ENCODE measurements at regions of chr11 and their contacts with region 1.

Region 1: DNA sequence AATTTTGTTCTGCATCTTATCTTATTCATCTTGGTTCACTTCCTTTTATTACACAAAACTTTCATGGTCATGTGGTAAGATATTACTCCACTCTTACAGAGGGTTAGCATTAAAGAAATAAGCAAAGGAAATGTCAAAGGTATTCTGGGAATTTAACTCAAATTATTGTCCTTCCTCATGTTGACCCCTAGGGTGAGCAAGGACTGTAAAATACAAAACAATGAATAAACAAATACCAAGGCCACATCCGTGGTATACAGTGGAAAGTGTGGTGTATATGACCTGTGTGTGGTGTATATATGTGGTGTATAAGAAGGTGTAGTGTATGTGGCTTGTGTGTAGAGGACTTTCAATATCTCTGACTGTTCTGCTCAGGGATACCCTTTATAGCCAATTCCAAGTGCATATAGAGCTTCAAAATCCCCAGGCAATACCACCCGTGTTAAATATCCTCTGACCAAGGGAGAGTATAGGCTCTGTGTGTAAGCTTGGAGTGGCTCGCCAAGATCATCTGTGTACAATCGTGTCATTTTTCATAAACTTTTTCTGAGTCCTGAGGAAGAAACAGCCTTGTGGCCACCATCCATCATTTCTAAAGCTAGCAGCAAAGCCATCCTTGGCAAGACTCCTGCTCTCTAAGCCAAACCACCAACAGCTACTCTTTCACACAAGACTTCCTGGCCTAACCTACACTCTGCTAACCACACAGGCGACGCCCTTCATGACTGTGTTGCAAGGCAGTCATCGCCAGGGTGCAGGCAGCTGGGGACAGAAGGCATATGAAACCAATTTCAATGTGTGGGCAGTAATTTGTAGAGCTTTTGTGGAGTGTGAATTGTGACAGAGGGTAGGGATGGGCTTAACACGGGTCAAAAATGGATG is 548.0 kb downstream of the ETS1 start:
- DNase-seq: peak; percentile 77
- H3K4me3 Mint-ChIP-seq: peak overlapping the region; percentile 68
- H3K27ac Mint-ChIP-seq: peak overlapping the region; percentile 92
- H3K4me1 Mint-ChIP-seq: peaks cover 34% of the 10 kb centered on the region
- H3K27me3 Mint-ChIP-seq: no peaks in the 10 kb centered on the region

Region 2: DNA sequence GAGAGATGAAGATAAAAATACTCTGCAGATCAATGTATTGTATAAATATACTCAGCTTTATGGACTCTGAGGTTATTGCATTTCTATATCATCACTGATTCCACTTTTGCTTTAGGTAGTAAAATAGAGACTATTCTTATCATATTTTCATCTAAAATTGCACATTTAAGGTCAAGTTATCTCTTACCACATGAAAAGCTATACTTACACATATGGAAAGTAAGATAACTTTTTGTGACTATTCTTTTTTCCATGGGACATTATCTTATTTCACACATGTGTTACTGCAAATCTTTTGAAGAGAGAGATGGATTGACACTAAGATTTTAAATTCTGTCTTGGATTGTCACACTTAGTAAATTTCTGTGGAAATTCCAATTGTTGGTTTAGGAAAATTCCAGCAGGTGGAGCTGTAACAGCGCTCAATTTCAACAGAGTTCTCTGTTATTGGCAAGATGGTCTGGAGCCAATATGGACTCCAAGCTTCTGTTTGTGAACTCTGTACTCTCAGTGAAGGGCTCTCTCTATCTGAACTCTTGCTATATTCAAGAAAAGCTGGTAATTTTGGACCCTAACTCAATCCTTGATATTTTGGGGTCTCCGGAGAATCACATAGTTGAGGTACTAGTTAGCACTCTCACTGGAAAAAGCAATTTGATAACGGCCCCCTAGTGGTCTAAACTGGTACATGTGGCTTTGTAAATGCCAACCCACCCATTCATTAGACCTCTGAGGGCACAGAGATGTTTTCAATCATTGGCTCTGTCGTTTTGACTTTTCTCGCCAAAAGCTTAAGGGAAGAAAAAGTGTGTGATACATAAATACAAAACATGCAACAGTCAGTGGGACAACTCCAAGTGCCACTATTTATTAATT is 118.3 kb after region 1 on chr11:
- intact Hi-C with region 1: loop called (anchors 2 kb)
- DNase-seq: peak; percentile 44
- H3K4me3 Mint-ChIP-seq: peak overlapping the region; percentile 16
- H3K27ac Mint-ChIP-seq: peak overlapping the region; percentile 66
- H3K4me1 Mint-ChIP-seq: peaks cover 13% of the 10 kb centered on the region
- H3K27me3 Mint-ChIP-seq: peaks cover 16% of the 10 kb centered on the region

Region 3: DNA sequence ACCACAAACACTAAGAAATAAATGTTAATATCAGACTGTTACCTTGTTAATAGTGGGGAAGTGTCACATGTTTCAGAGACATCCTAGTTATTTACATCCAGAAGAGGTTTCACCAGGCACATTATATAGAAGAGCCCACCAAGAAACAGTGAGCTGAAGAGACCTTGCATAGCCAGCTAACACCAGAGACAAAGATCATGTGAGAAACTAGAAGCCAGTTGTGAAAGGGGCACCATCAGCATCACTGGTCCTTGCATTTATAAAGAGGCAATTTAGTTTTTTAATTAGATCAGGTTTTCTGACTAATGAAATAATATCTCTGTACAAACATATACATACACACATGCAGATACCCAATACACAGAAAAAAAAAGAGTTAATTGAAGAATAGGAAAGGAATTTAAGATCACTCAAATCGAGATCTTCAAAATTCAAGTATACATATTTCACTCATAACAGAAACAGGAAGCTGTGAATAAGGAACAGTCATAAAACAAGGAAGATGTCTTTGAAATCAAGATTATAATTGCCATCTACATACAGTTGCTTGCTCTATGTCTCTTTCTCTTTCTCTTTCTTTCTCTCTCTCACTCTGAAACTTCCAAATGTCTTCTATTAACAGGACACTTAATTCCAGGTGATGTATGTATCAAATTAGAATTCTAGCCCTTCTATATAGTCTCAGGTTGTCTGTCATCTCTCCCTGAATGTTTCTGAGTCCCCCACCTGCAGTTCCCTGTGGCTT is 199.3 kb after region 1 on chr11:
- intact Hi-C with region 1: loop called (anchors 1 kb)
- DNase-seq: no peak
- H3K4me3 Mint-ChIP-seq: peak overlapping the region; percentile 0
- H3K27ac Mint-ChIP-seq: peak overlapping the region; percentile 47
- H3K4me1 Mint-ChIP-seq: peaks cover 35% of the 10 kb centered on the region
- H3K27me3 Mint-ChIP-seq: peaks cover 2% of the 10 kb centered on the region

Region 4: GRCh38 chr11:128582496-128583366 is 543.4 kb after region 1 on chr11:
- intact Hi-C with region 1: loop called (anchors 1 kb)
- DNase-seq: no peak
- H3K4me3 Mint-ChIP-seq: no peak overlapping the region
- H3K27ac Mint-ChIP-seq: peak overlapping the region; percentile 80
- H3K4me1 Mint-ChIP-seq: peaks cover 51% of the 10 kb centered on the region
- H3K27me3 Mint-ChIP-seq: peaks cover 6% of the 10 kb centered on the region

Region 5: DNA sequence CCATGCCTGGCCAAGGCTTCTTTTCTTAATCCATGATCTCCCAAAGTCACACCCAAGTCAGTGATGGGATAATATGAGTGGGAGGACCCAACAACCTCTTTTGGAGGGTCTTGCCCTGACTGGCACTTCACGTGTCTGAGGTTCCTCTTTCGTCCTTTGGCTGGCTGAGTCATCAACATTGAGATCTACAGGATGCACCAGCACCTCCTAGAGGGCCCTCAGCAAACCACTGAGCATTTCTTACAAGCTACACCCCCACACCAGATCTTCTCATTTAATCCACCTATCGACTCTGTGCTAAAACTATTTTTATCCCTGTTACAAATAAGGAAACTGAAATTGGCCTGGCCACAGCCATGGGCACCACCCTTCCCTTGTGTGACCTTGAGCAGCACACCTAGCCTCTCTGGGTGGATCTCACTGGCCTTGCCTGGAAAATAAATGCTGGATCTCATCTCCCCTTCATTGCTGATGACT is 717.9 kb after region 1 on chr11:
- intact Hi-C with region 1: loop called (anchors 1 kb)
- DNase-seq: peak; percentile 55
- H3K4me3 Mint-ChIP-seq: peak overlapping the region; percentile 63
- H3K27ac Mint-ChIP-seq: peak overlapping the region; percentile 95
- H3K4me1 Mint-ChIP-seq: peaks cover 68% of the 10 kb centered on the region
- H3K27me3 Mint-ChIP-seq: no peaks in the 10 kb centered on the region

Region 6: GRCh38 chr11:128965485-128965884 is 926.1 kb after region 1 on chr11:
- intact Hi-C with region 1: loop called (anchors 2 kb)
- DNase-seq: peak; percentile 6
- H3K4me3 Mint-ChIP-seq: peak overlapping the region; percentile 41
- H3K27ac Mint-ChIP-seq: peak overlapping the region; percentile 53
- H3K4me1 Mint-ChIP-seq: peaks cover 66% of the 10 kb centered on the region
- H3K27me3 Mint-ChIP-seq: no peaks in the 10 kb centered on the region

Measured in activated T-helper 1 cell treated with anti-CD3 and anti-CD28 coated beads, Interleukin-12 subunit alpha, Interleukin-12 subunit beta, Interleukin-2, Interleukin-4 antibody, amounts not matched to agents 30 ng/mL and 10 ng/mL and 1 ng/mL, durations not matched to agents 14 hours and 24 hours and 36 hours (primary cell).